BJ (cell line): ENCODE measurements at regions of chr1 and their contacts with region 1.

Region 1: GRCh38 chr1:28208818-28209441 is 23.9 kb downstream of the DNAJC8 start:
- DNase-seq: peak; percentile 6
- H3K4me3 ChIP-seq: no peak overlapping the region
- H3K27me3 ChIP-seq: no peaks in the 10 kb centered on the region
- CTCF ChIP-seq: peak; percentile 81

Region 2: DNA sequence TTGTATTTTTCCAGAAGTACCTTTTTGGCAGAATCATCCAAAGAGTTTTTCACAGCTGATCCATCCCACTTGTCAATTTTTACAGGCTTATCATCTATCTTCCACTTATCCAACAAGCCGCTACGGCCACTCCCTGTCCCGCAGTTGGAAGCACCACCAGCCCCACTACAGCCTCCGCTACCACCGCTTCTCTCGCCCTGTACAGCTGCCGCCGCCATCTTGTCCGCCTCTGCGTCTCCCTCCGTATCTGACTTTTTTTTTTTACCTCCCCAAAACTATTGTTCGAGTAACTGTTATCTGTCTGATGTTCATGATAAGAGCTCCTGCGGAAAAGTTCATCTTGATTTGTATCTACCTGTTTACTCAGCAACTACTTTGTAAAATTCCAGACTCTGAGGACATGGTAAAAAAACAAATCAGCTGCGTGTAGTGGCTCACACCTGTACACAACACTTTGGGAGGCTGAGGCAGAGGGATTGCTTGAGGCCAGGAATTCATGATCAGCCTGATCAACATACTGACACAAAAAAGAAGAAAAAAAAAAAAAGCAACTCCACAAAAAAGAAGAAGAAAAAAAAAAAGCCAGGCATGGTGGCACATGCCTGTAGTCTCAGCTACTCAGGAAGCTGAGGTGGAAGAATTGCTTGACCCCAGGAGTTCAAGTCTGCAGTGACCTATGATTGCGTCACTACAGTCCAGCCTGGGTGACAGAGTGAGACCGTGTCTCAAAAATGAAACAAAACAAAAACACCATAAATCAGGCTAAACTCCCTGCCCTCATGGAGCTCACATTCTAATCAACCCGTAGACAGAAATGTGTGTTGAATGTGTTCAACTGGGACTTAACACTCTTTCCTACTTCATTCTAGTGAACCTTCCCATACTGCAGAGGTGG is 112.5 kb before region 1 on chr1:
- CTCF ChIA-PET with region 1: interaction called, 134 read pairs
- POLR2A ChIA-PET with region 1: no interaction called
- DNase-seq: no peak
- H3K4me3 ChIP-seq: no peak overlapping the region
- H3K27me3 ChIP-seq: no peaks in the 10 kb centered on the region
- CTCF ChIP-seq: no peak

Region 3: GRCh38 chr1:28229996-28230395 is 21.1 kb after region 1 on chr1:
- CTCF ChIA-PET with region 1: interaction called, 9 read pairs
- POLR2A ChIA-PET with region 1: interaction called, 11 read pairs
- DNase-seq: no peak
- H3K4me3 ChIP-seq: no peak overlapping the region
- H3K27me3 ChIP-seq: no peaks in the 10 kb centered on the region
- CTCF ChIP-seq: no peak

Region 4: GRCh38 chr1:28273216-28273860 is 64.4 kb after region 1 on chr1:
- CTCF ChIA-PET with region 1: no interaction called
- POLR2A ChIA-PET with region 1: no interaction called
- DNase-seq: no peak
- H3K4me3 ChIP-seq: no peak overlapping the region
- H3K27me3 ChIP-seq: no peaks in the 10 kb centered on the region
- CTCF ChIP-seq: no peak